ENCODE measurements at regions of chr11 and their contacts with region 1.

Region 1: GRCh38 chr11:122754553-122755322 is 83.6 kb upstream of the CRTAM start:
- DNase-seq: peak; percentile 65
- ATAC-seq: no peak
- H3K4me3 ChIP-seq: no peak overlapping the region
- H3K4me3 Mint-ChIP-seq: no peak overlapping the region
- H3K27ac ChIP-seq: no peak overlapping the region
- H3K27ac Mint-ChIP-seq: no peak overlapping the region
- H3K4me1 ChIP-seq: peaks cover 17 to 28% of the 10 kb centered on the region in 2 donors
- H3K4me1 Mint-ChIP-seq: peaks cover 30% of the 10 kb centered on the region
- H3K27me3 ChIP-seq: peaks cover 0 to 21% (median 4%) of the 10 kb centered on the region in 4 experiments
- H3K27me3 Mint-ChIP-seq: peaks cover 20% of the 10 kb centered on the region
- CTCF ChIP-seq: peak; percentile 71

Region 2: GRCh38 chr11:122628810-122629555 is 125.8 kb before region 1 on chr11:
- CTCF ChIA-PET with region 1: interaction called, 405 read pairs
- POLR2A ChIA-PET with region 1: no interaction called
- intact Hi-C with region 1: loop called (anchors 1 kb)
- DNase-seq: peak; percentile 74
- ATAC-seq: peak; percentile 73
- H3K4me3 ChIP-seq: no peak overlapping the region
- H3K4me3 Mint-ChIP-seq: no peak overlapping the region
- H3K27ac ChIP-seq: no peak overlapping the region
- H3K27ac Mint-ChIP-seq: no peak overlapping the region
- H3K4me1 ChIP-seq: no peaks in the 10 kb centered on the region
- H3K4me1 Mint-ChIP-seq: peaks cover 5% of the 10 kb centered on the region
- H3K27me3 ChIP-seq: peaks cover 0 to 4% (median 0%) of the 10 kb centered on the region in 4 experiments
- H3K27me3 Mint-ChIP-seq: peaks cover 12% of the 10 kb centered on the region
- CTCF ChIP-seq: peak; percentile 78

Region 3: DNA sequence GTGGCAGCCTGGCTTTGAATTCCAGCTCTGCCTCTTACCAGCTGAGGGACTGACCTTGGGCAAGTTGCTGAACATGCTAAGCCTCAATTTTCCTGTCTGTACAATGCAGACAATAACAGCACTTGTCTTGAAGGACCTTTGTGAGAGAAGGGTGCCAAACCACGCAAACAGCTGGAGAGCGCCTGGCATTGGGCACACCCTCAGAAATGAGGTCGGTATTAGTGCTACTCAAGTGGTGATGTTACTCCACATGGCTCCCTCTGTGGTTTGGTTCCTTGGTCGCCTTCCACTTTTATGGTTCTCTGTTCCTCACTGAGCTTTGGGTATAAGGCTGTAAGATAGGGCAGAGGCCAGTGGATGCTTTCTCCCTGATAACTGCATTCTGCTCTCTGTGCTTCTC is 91.0 kb before region 1 on chr11:
- CTCF ChIA-PET with region 1: interaction called, 92 read pairs
- POLR2A ChIA-PET with region 1: interaction called, 7 read pairs
- intact Hi-C with region 1: no loop called
- DNase-seq: no peak
- ATAC-seq: no peak
- H3K4me3 ChIP-seq: no peak overlapping the region
- H3K4me3 Mint-ChIP-seq: no peak overlapping the region
- H3K27ac ChIP-seq: no peak overlapping the region
- H3K27ac Mint-ChIP-seq: no peak overlapping the region
- H3K4me1 ChIP-seq: peaks cover 15 to 19% of the 10 kb centered on the region in 2 donors
- H3K4me1 Mint-ChIP-seq: peaks cover 35% of the 10 kb centered on the region
- H3K27me3 ChIP-seq: peaks cover 0 to 3% (median 0%) of the 10 kb centered on the region in 4 experiments
- H3K27me3 Mint-ChIP-seq: no peaks in the 10 kb centered on the region
- CTCF ChIP-seq: no peak

Region 4: GRCh38 chr11:122711831-122712381 is 42.8 kb before region 1 on chr11:
- CTCF ChIA-PET with region 1: interaction called, 21 read pairs
- POLR2A ChIA-PET with region 1: no interaction called
- intact Hi-C with region 1: loop called (anchors 1 kb)
- DNase-seq: no peak
- ATAC-seq: no peak
- H3K4me3 ChIP-seq: no peak overlapping the region
- H3K4me3 Mint-ChIP-seq: no peak overlapping the region
- H3K27ac ChIP-seq: no peak overlapping the region
- H3K27ac Mint-ChIP-seq: peak overlapping the region; percentile 26
- H3K4me1 ChIP-seq: peaks cover 52 to 60% of the 10 kb centered on the region in 2 donors
- H3K4me1 Mint-ChIP-seq: peaks cover 58% of the 10 kb centered on the region
- H3K27me3 ChIP-seq: no peaks in the 10 kb centered on the region
- H3K27me3 Mint-ChIP-seq: no peaks in the 10 kb centered on the region
- CTCF ChIP-seq: no peak

Region 5: DNA sequence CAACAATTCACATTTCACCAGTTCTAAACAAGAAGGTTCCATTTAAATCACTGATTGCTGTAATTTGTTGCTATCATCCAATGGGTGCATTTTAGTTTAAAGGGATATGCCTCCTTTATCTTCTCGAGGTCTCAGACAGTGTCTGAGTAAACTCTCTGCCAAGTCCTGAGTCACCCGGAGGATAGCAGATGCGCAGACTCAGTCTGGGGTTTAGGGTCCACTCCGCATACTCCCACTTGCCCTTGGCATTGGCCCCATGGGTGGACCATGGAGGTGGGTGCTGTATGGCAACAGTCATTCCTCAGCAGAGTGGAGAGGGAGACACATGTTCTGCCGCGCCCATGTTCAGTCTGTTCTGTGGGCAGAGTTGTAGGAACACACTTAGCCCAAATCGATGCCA is 18.2 kb after region 1 on chr11:
- CTCF ChIA-PET with region 1: interaction called, 11 read pairs
- POLR2A ChIA-PET with region 1: no interaction called
- intact Hi-C with region 1: no loop called
- DNase-seq: no peak
- ATAC-seq: no peak
- H3K4me3 ChIP-seq: no peak overlapping the region
- H3K4me3 Mint-ChIP-seq: no peak overlapping the region
- H3K27ac ChIP-seq: no peak overlapping the region
- H3K27ac Mint-ChIP-seq: no peak overlapping the region
- H3K4me1 ChIP-seq: no peaks in the 10 kb centered on the region
- H3K4me1 Mint-ChIP-seq: peaks cover 6% of the 10 kb centered on the region
- H3K27me3 ChIP-seq: no peaks in the 10 kb centered on the region
- H3K27me3 Mint-ChIP-seq: peaks cover 5% of the 10 kb centered on the region
- CTCF ChIP-seq: no peak

Region 6: DNA sequence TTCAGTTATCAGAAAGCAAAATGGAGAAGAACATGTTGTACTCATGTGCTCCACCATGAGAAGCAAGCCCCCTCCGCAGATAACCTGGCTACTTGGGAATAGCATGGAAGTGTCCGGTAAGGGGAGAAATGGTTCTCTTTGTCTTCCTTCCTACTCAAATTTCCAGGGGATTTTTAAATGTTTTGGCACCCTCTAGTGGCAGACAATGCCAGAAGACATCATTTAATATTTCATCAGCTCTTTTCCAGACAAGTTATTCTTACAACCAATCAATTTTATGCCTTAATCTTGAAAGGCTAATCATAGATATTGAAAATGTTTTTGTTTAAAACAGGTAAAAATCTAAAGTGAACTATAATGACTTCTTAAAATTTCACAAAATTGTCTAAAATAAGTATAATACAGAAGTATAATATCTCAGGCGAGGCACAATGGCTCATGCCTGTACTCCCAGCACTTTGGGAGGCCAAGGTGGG is 99.3 kb after region 1 on chr11:
- CTCF ChIA-PET with region 1: interaction called, 30 read pairs
- POLR2A ChIA-PET with region 1: no interaction called
- intact Hi-C with region 1: no loop called
- DNase-seq: peak; percentile 79
- ATAC-seq: no peak
- H3K4me3 ChIP-seq: no peak overlapping the region
- H3K4me3 Mint-ChIP-seq: no peak overlapping the region
- H3K27ac ChIP-seq: no peak overlapping the region
- H3K27ac Mint-ChIP-seq: no peak overlapping the region
- H3K4me1 ChIP-seq: peaks cover 14 to 23% of the 10 kb centered on the region in 2 donors
- H3K4me1 Mint-ChIP-seq: peaks cover 24% of the 10 kb centered on the region
- H3K27me3 ChIP-seq: no peaks in the 10 kb centered on the region
- H3K27me3 Mint-ChIP-seq: no peaks in the 10 kb centered on the region
- CTCF ChIP-seq: peak; percentile 84